IMR-90 (cell line): ENCODE measurements at regions of chr6 and their contacts with region 1.

Region 1: DNA sequence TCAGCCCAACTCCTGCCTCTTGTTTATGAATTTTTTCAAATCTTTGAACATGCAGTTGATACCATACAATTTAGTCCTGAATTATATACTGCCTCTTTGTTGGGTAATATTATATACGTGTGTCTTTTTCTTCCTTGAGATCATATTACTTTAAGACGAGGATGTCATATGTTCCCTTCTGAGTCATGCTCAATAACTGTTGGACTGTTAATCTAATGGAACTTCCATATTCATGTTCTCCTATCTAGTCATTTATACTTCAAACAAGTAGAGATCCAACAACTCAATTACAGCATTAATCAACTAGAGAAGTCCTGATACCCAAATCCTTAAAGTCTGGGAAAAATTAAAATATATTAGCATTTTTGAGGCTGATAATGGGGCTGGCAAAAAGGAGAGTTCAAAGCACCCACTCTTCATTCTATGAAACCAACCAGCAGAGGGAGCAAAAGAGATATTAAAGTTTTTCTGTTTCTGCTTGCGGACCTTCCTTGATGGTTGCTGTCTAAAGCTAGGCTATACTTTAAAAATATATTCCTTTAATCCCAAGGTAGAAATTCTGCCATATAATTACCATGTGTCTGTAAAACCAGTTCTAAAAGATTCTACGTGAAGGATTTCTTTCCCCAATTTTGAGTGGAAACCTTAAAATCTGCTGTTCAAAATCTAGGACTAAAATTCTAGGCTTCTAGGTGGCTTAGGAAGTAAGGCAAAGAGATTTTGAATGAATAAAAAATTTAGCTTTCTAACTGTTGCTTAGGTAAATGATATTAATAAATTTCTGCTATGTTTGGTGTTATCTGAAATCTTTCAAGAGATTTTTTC is 498.9 kb downstream of the BCKDHB start:
- DNase-seq: peak; percentile 68
- ATAC-seq: peak; percentile 71
- H3K4me3 ChIP-seq: no peak overlapping the region
- H3K27ac ChIP-seq: no peak overlapping the region
- H3K4me1 ChIP-seq: peaks cover 3% of the 10 kb centered on the region; the same call in 1 of the 2 replicates
- H3K27me3 ChIP-seq: no peaks in the 10 kb centered on the region
- CTCF ChIP-seq: peak; percentile 56
- POLR2A ChIP-seq: no peak
- RAD21 ChIP-seq: peak; percentile 64

Region 2: DNA sequence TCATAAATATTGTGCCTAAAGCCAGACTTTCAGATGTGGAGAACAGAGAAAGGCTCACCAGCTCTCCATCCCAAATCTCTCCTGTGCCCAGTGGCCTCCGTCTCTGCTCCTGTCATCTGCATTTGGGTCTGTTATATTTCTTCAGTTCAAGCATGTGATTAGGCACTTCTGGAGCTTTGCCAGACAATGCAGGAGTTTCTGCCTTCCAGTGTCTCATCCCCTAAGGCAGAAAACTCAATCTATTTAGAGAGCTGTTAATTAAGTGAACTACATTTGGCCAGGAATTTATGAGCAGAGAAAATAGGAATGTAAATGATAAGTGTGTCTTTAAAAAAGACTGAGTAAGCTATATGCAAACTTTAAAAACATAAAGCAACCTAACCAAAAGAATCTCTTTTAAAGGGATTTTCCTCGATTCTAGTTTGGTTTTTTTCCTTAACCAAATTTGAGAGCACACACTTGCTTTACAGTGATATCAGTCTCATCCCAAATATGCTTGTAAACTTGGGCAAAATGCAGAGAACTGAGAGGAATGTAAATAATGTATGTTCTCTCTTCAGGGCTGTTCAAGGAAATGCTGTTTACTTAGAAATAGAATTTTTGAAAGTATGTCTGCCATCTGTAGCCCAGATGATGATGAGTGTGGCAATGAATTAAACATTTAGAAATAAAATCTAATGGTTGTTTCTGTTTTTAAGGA is 772.0 kb before region 1 on chr6:
- CTCF ChIA-PET with region 1: no interaction called
- POLR2A ChIA-PET with region 1: no interaction called
- dilution Hi-C with region 1: no loop called
- in situ Hi-C with region 1: no loop called
- intact Hi-C with region 1: no loop called
- DNase-seq: no peak
- ATAC-seq: no peak
- H3K4me3 ChIP-seq: no peak overlapping the region
- H3K27ac ChIP-seq: no peak overlapping the region
- H3K4me1 ChIP-seq: no peaks in the 10 kb centered on the region
- H3K27me3 ChIP-seq: no peaks in the 10 kb centered on the region
- CTCF ChIP-seq: no peak
- POLR2A ChIP-seq: no peak
- RAD21 ChIP-seq: no peak

Region 3: DNA sequence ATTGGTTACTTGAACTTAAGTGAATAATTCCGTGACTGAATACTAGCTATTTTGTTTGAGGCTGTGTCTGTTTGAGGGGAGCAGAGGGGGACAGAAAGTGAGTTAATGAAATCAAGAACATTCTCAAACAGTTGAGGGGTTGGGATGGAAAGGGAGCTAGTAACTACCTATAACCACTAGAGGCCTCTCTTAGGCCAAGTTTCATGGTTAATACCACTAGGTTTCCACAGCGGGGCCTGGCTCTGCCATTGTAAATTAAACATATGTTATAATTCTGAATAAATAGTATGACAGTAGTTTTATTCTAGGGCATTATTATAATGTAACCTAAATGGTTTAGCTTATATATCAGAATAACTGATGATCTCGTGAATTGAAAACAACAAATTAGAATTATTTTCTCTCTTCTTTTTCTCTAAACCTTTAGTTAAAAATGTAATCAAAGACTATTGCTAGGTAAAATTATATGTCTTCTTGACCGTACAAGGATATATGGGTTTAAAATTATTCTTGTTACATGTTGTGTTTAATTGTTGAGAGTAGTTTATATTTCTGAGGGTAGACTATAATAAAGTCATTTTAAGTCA is 390.8 kb before region 1 on chr6:
- CTCF ChIA-PET with region 1: no interaction called
- POLR2A ChIA-PET with region 1: no interaction called
- dilution Hi-C with region 1: no loop called
- in situ Hi-C with region 1: no loop called
- intact Hi-C with region 1: loop called (anchors 2 kb)
- DNase-seq: peak; percentile 70
- ATAC-seq: peak; percentile 97
- H3K4me3 ChIP-seq: no peak overlapping the region
- H3K27ac ChIP-seq: no peak overlapping the region
- H3K4me1 ChIP-seq: peaks cover 2% of the 10 kb centered on the region; the same call in 1 of the 2 replicates
- H3K27me3 ChIP-seq: no peaks in the 10 kb centered on the region
- CTCF ChIP-seq: peak; percentile 87
- POLR2A ChIP-seq: no peak
- RAD21 ChIP-seq: peak; percentile 90

Region 4: GRCh38 chr6:80425089-80425823 is 180.1 kb before region 1 on chr6:
- CTCF ChIA-PET with region 1: no interaction called
- POLR2A ChIA-PET with region 1: no interaction called
- dilution Hi-C with region 1: no loop called
- in situ Hi-C with region 1: no loop called
- intact Hi-C with region 1: loop called (anchors 5 kb)
- DNase-seq: peak; percentile 99
- ATAC-seq: peak; percentile 98
- H3K4me3 ChIP-seq: no peak overlapping the region
- H3K27ac ChIP-seq: peak overlapping the region; percentile 90; the same call in 1 of the 2 replicates
- H3K4me1 ChIP-seq: peaks cover 7% of the 10 kb centered on the region
- H3K27me3 ChIP-seq: no peaks in the 10 kb centered on the region
- CTCF ChIP-seq: peak; percentile 24; the same call in 1 of the 2 replicates
- POLR2A ChIP-seq: no peak
- RAD21 ChIP-seq: peak; percentile 16; the same call in 1 of the 2 replicates

Region 5: GRCh38 chr6:81233990-81234389 is 628.6 kb after region 1 on chr6:
- CTCF ChIA-PET with region 1: no interaction called
- POLR2A ChIA-PET with region 1: no interaction called
- dilution Hi-C with region 1: no loop called
- in situ Hi-C with region 1: no loop called
- intact Hi-C with region 1: loop called (anchors 5 kb)
- DNase-seq: no peak
- ATAC-seq: no peak
- H3K4me3 ChIP-seq: no peak overlapping the region
- H3K27ac ChIP-seq: no peak overlapping the region
- H3K4me1 ChIP-seq: no peaks in the 10 kb centered on the region
- H3K27me3 ChIP-seq: no peaks in the 10 kb centered on the region
- CTCF ChIP-seq: no peak
- POLR2A ChIP-seq: no peak
- RAD21 ChIP-seq: no peak

Region 6: DNA sequence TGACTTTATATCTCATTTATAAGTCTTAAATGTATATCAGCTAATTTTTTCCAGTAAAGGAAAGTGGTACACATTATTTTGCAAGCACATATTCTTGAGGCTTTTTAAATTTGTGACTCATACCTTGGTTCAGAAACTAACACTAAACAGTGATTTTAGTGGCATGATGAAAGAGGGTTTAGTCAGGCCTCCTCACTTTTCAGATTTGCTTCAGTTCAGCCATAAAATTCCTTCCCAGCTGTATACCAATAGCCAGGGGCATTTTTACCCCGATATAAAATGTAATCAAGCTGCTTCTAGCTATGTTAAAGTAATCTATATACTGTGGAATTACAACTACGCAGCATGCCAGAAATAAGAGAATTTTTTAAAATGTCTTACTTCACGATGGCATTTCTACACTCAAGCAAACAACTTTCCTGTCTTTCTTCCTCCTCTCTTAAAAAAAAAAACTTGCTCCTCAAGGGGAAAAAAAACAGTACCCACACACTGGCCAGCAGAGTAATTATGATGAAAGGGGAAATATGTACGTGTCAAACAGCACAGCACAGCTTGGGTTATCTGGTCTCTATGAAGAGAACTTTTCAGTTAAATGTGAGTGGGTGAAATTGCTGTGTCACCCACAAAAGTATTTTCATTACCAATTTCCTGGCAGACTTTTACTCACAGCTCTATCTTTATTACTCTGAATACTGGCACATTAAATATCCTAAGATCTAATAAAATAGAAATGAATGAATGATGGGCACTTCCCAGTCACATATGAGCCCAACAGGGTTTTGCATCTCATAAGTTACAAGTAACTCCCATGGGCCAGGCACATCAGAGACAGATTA is 1391.9 kb after region 1 on chr6:
- CTCF ChIA-PET with region 1: no interaction called
- POLR2A ChIA-PET with region 1: no interaction called
- dilution Hi-C with region 1: no loop called
- in situ Hi-C with region 1: no loop called
- intact Hi-C with region 1: loop called (anchors 10 kb)
- DNase-seq: peak; percentile 88
- ATAC-seq: peak; percentile 73
- H3K4me3 ChIP-seq: no peak overlapping the region
- H3K27ac ChIP-seq: peak overlapping the region; percentile 61
- H3K4me1 ChIP-seq: peaks cover 19% of the 10 kb centered on the region
- H3K27me3 ChIP-seq: no peaks in the 10 kb centered on the region
- CTCF ChIP-seq: no peak
- POLR2A ChIP-seq: 0 out of 2 replicates have a peak, but pooled peaks have one; percentile 20
- RAD21 ChIP-seq: no peak